B cell (primary cell): ENCODE measurements at regions of chr1 and their contacts with region 1.

Region 1: DNA sequence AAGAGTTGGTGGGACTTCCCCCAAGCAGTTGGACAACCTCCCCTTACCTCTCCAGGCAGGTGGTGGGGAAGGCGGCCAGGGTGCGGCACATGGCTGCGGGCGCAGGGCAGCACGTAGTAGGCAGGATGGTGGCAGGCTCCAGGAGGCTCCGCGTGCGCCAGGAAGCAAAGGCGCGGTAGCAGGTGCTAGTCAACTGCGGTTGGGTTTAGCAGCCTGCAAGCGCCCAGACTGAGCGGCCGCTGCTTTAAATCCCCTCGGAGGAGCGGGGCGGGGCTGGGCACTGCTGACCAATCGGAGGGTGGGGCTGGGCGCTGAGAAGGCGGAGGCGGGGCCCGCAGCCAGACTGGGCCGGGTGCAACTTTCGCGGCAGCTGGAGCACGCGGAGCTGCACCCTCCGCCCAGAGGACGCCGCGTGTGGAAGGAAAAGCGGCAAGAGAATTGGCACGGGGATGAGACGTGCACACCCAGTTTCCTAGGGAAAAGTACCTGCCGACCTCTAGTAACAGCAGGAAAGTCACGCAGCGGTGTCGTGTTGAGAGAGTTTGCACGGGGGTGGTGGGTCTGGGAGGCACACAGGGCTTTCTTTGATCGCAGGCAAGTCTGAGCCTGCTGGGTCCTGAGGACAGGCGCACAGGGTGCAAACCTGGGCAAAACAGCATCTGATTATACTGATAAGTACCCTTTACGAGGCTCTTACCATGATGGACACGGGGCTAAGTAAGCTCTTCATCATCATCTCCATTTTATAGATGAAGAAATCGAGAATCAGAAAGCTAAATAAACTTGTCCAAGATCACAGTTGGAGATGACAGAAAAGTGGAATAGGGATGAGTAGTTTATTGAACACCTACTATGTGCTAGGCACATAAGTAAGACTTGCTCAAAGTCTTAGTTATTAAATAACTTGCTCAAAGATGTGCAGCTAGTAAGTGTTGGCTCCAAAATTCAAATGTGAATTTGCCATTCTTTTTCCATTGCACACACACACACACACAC is at the start of gene RGS16:
- DNase-seq: peak; percentile 91
- ATAC-seq: peak; percentile 98
- H3K4me3 ChIP-seq: peak within 1 kb of the TSS in 4 of 5 experiments; percentile 47 to 67 (median 59)
- H3K4me3 Mint-ChIP-seq: no peak within 1 kb of the TSS
- H3K27ac ChIP-seq: no peak within 1 kb of the TSS
- H3K27ac Mint-ChIP-seq: peak within 1 kb of the TSS; percentile 83
- H3K4me1 ChIP-seq: peaks cover 26 to 29% of the 10 kb centered on the region in 2 donors
- H3K4me1 Mint-ChIP-seq: peaks cover 3% of the 10 kb centered on the region
- H3K27me3 ChIP-seq: peaks cover 0 to 7% (median 0%) of the 10 kb centered on the region in 4 experiments
- H3K27me3 Mint-ChIP-seq: no peaks in the 10 kb centered on the region
- CTCF ChIP-seq: no peak
- total RNA-seq, gene RGS16: 3.1 and 3.3 TPM in 2 replicates

Region 2: GRCh38 chr1:182484591-182485257 is 119.7 kb before region 1 on chr1:
- CTCF ChIA-PET with region 1: interaction called, 19 read pairs
- POLR2A ChIA-PET with region 1: interaction called, 3 read pairs
- intact Hi-C with region 1: no loop called
- DNase-seq: peak; percentile 79
- ATAC-seq: peak; percentile 99
- H3K4me3 ChIP-seq: no peak overlapping the region
- H3K4me3 Mint-ChIP-seq: peak overlapping the region; percentile 12
- H3K27ac ChIP-seq: no peak overlapping the region
- H3K27ac Mint-ChIP-seq: peak overlapping the region; percentile 10
- H3K4me1 ChIP-seq: peaks cover 19 to 22% of the 10 kb centered on the region in 2 donors
- H3K4me1 Mint-ChIP-seq: peaks cover 38% of the 10 kb centered on the region
- H3K27me3 ChIP-seq: no peaks in the 10 kb centered on the region
- H3K27me3 Mint-ChIP-seq: no peaks in the 10 kb centered on the region
- CTCF ChIP-seq: peak; percentile 69

Region 3: GRCh38 chr1:182614796-182615454 is 10.5 kb after region 1 on chr1:
- CTCF ChIA-PET with region 1: interaction called, 70 read pairs
- POLR2A ChIA-PET with region 1: interaction called, 10 read pairs
- intact Hi-C with region 1: loop called (anchors 1 kb)
- DNase-seq: peak; percentile 83
- ATAC-seq: peak; percentile 73
- H3K4me3 ChIP-seq: peak overlapping the region; percentile 50 to 89 (median 63)
- H3K4me3 Mint-ChIP-seq: peak overlapping the region; percentile 92
- H3K27ac ChIP-seq: peak overlapping the region in 1 of 2 donors; percentile 71
- H3K27ac Mint-ChIP-seq: peak overlapping the region; percentile 77
- H3K4me1 ChIP-seq: peaks cover 25 to 28% of the 10 kb centered on the region in 2 donors
- H3K4me1 Mint-ChIP-seq: peaks cover 29% of the 10 kb centered on the region
- H3K27me3 ChIP-seq: peaks cover 2 to 38% (median 11%) of the 10 kb centered on the region in 4 experiments
- H3K27me3 Mint-ChIP-seq: peaks cover 8% of the 10 kb centered on the region
- CTCF ChIP-seq: no peak

Region 4: GRCh38 chr1:182789138-182790076 is 184.9 kb after region 1 on chr1 and contains the start of gene NPL:
- CTCF ChIA-PET with region 1: interaction called, 989 read pairs
- POLR2A ChIA-PET with region 1: interaction called, 5 read pairs
- intact Hi-C with region 1: loop called (anchors 1 kb)
- DNase-seq: peak; percentile 88
- ATAC-seq: peak; percentile 95
- H3K4me3 ChIP-seq: peak within 1 kb of the TSS; percentile 49 to 70 (median 63)
- H3K4me3 Mint-ChIP-seq: peak within 1 kb of the TSS; percentile 90
- H3K27ac ChIP-seq: peak within 1 kb of the TSS in 1 of 2 donors; percentile 63
- H3K27ac Mint-ChIP-seq: peak within 1 kb of the TSS; percentile 87
- H3K4me1 ChIP-seq: peaks cover 9 to 11% of the 10 kb centered on the region in 2 donors
- H3K4me1 Mint-ChIP-seq: peaks cover 16% of the 10 kb centered on the region
- H3K27me3 ChIP-seq: peaks cover 0 to 6% (median 0%) of the 10 kb centered on the region in 4 experiments
- H3K27me3 Mint-ChIP-seq: peaks cover 3% of the 10 kb centered on the region
- CTCF ChIP-seq: no peak
- total RNA-seq, gene NPL: 3.4 and 5.9 TPM in 2 replicates

Region 5: DNA sequence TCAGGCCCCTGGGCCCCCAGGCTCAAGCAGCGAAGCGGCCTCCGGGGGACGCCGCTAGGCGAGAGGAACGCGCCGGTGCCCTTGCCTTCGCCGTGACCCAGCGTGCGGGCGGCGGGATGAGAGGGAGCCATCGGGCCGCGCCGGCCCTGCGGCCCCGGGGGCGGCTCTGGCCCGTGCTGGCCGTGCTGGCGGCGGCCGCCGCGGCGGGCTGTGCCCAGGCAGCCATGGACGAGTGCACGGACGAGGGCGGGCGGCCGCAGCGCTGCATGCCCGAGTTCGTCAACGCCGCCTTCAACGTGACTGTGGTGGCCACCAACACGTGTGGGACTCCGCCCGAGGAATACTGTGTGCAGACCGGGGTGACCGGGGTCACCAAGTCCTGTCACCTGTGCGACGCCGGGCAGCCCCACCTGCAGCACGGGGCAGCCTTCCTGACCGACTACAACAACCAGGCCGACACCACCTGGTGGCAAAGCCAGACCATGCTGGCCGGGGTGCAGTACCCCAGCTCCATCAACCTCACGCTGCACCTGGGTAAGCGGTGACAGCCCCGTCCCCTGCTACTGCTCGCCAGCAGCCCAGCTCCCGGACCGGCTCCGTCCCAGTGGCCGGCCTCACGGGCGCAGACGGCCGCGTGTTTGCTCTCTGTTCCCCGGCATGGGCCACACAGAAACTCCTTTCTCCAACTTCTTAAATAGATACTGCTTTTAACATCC is 419.3 kb after region 1 on chr1:
- CTCF ChIA-PET with region 1: no interaction called
- POLR2A ChIA-PET with region 1: no interaction called
- intact Hi-C with region 1: loop called (anchors 5 kb)
- DNase-seq: peak; percentile 84
- ATAC-seq: peak; percentile 73
- H3K4me3 ChIP-seq: peak overlapping the region; percentile 45 to 82 (median 68)
- H3K4me3 Mint-ChIP-seq: peak overlapping the region; percentile 99
- H3K27ac ChIP-seq: peak overlapping the region in 1 of 2 donors; percentile 20
- H3K27ac Mint-ChIP-seq: peak overlapping the region; percentile 97
- H3K4me1 ChIP-seq: peaks cover 19 to 21% of the 10 kb centered on the region in 2 donors
- H3K4me1 Mint-ChIP-seq: peaks cover 45% of the 10 kb centered on the region
- H3K27me3 ChIP-seq: no peaks in the 10 kb centered on the region
- H3K27me3 Mint-ChIP-seq: no peaks in the 10 kb centered on the region
- CTCF ChIP-seq: peak; percentile 75